Panc1 (cell line): ENCODE measurements at regions of chr5 and their contacts with region 1.

Region 1: GRCh38 chr5:176373100-176373818 is 8.0 kb downstream of the ARL10 start:
- DNase-seq: no peak
- ATAC-seq: no peak
- H3K4me3 ChIP-seq: no peak overlapping the region
- H3K27ac ChIP-seq: no peak overlapping the region
- H3K4me1 ChIP-seq: no peaks in the 10 kb centered on the region
- H3K27me3 ChIP-seq: no peaks in the 10 kb centered on the region
- CTCF ChIP-seq: no peak

Region 2: DNA sequence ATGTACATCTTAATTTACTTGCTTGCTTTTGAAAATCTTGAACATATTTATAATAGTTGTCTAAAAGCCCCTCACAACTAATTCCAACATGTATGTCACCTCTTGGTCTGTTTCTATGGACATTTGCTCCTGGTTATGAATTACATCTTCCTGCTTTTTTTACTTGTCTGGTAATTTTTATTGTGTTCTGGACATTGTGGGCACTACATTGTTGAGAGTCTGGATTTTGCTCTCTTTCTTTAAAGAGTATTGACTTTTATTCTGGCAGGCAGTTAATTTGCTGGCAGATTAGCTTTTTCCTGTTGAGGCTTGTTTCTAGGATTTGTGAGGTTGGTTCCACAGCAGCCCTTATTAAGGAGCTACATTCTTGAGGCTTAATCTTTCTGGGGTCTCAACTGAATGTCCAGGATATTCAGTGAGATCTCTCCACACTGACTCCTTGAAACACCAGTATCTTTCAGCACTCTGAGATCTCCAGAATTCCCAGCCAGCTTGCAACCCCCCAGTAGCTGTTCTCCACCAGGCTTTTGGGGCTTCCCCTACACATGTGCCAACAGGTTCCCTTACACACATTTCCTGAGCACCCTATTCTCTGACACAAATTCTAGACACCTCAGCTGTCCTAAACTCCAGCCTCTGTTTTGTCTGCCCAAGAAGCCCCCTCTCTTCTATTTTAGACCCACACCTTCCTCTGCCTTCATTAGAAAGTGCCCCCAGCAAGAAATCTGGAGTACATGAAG is 39.1 kb before region 1 on chr5:
- CTCF ChIA-PET with region 1: no interaction called
- POLR2A ChIA-PET with region 1: interaction called, 14 read pairs
- in situ Hi-C with region 1: no loop called
- intact Hi-C with region 1: no loop called
- DNase-seq: no peak
- ATAC-seq: no peak
- H3K4me3 ChIP-seq: no peak overlapping the region
- H3K27ac ChIP-seq: no peak overlapping the region
- H3K4me1 ChIP-seq: no peaks in the 10 kb centered on the region
- H3K27me3 ChIP-seq: no peaks in the 10 kb centered on the region
- CTCF ChIP-seq: no peak

Region 3: DNA sequence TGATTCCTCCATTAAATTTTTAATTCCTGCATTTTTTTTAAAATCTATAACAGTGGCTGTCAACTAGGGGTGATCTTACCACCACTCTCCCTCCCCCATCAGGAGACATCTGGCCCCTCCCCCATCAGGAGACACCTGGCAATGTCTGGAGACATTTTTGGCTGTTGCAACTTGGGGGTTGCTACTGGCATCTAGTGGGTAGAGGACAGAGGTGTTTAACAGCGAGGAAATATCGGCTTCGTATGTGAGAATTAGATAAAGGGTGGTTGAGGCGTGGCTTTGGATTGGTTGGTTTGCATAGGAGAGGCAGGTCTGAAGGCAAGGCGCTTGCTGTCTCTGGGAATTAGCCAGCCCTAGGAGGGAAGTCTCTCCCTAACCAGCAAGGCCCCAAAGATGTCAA is 186.4 kb after region 1 on chr5:
- CTCF ChIA-PET with region 1: no interaction called
- POLR2A ChIA-PET with region 1: no interaction called
- in situ Hi-C with region 1: no loop called
- intact Hi-C with region 1: no loop called
- DNase-seq: no peak
- ATAC-seq: no peak
- H3K4me3 ChIP-seq: no peak overlapping the region
- H3K27ac ChIP-seq: no peak overlapping the region
- H3K4me1 ChIP-seq: no peaks in the 10 kb centered on the region
- H3K27me3 ChIP-seq: no peaks in the 10 kb centered on the region
- CTCF ChIP-seq: no peak